ENCODE measurements at regions of chr12 and their contacts with region 1.

Region 1: GRCh38 chr12:13100882-13101769 is 2.3 kb downstream of the GSG1 start:
- DNase-seq: peak; percentile 97
- ATAC-seq: peak; percentile 88

Region 2: DNA sequence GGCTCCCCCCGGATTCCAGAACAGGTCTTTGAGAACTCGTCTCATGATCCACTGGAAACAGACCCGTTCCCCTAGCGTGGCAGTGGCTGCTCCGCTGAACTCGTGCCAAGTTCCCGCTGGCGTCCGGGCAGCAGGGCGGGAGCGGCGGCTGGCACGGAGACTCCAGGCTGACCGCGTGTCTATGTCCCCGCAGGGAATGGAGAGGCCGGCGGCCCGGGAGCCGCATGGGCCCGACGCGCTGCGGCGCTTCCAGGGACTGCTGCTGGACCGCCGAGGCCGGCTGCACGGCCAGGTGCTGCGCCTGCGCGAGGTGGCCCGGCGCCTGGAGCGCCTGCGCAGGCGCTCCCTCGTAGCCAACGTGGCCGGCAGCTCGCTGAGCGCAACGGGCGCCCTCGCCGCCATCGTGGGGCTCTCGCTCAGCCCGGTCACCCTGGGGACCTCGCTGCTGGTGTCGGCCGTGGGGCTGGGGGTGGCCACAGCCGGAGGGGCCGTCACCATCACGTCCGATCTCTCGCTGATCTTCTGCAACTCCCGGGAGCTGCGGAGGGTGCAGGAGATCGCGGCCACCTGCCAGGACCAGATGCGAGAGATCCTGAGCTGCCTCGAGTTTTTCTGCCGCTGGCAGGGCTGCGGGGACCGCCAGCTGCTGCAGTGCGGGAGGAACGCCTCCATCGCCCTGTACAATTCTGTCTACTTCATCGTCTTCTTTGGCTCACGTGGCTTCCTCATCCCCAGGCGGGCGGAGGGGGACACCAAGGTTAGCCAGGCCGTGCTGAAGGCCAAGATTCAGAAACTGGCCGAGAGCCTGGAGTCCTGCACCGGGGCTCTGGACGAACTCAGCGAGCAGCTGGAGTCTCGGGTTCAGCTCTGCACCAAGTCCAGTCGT is 314.2 kb before region 1 on chr12:
- intact Hi-C with region 1: loop called (anchors 10 kb)
- DNase-seq: peak; percentile 91
- ATAC-seq: peak; percentile 93

Region 3: DNA sequence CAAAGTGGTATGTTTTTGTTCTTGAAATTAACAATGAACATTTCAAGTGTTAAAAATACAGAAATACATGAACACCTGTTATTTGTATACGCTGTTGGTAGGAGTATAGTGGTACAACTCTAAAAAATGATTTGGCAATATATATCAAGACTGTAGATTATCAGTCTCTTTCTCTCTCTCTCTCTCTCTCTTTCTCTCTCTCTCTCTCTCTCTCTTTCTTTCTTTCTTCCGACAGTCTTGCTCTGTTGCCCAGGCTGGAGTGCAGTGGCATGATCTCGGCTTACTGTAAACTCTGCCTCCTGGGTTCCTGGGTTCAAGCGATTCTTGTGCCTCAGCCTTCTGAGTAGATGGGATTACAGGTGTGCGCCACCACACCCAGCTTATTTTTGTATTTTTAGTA is 113.7 kb before region 1 on chr12:
- intact Hi-C with region 1: no loop called
- DNase-seq: no peak
- ATAC-seq: no peak

Region 4: GRCh38 chr12:12999959-13000615 is 101.0 kb before region 1 on chr12 and contains the start of gene HEBP1:
- intact Hi-C with region 1: loop called (anchors 5 kb)
- DNase-seq: peak; percentile 99
- ATAC-seq: peak; percentile 97
- total RNA-seq, gene HEBP1: 63.5 TPM

Region 5: DNA sequence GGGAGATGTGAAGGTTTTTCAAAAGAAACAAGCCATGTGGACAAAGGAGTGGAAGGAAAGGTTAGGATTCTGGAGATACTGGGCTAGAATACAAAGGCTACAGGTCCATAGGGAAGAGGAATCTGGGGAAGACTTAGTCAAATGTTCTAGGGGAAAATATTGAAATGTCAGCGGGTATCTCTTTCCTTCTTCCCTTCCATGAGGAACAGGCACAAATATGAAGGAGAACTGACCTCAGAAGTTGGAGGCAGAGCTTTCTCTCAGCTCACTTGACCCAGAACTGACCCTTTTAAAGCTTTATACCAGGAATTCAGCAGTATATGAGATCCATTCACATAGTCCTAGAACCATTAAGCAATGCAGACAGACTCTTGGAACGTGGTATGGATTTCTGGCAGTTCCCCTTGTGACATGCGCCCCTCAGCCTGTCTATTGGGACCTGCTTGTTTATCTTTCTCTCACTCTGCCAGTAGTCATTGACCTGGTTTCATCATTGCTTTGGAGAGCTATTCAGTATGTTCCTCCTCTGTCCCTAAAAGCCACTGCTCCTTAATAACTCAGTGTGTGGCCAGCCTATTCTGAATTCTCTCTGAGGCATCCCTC is 45.3 kb after region 1 on chr12:
- intact Hi-C with region 1: loop called (anchors 2 kb)
- DNase-seq: no peak
- ATAC-seq: peak; percentile 89

Region 6: DNA sequence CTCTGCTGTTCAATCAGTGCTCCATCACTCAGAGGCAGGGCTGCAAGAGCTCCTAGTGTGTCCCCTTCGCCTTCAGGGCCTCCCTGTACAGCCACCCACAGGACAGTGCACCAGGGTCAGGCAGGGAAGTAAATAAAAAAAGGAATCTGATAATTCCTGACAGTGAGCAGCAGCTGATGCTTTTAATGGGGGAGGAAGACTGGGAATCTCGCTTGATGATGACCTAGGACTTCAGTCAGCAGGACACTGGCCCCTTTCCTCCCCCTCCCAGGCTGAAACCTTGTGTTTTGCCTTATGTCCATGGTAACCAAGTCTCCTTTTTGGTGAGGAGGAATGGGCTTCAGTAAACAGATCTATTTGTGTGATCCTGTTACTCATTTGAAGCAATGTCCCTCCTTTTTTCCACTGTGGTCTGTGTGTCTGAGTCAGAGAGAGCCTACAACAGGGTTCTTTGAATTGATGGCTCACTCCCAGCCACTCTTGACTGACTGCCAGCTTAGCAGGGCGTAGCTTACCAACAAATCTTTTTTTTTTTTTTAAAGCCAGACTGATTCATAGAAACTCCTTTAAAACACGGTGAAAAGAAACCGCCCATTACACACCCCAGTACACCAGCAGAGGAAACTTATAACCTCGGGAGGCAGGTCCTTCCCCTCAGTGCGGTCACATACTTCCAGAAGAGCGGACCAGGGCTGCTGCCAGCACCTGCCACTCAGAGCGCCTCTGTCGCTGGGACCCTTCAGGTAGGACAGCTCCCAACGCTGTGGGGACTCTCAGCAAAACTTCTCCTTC is 95.2 kb after region 1 on chr12 and contains the start of gene EMP1:
- intact Hi-C with region 1: loop called (anchors 1 kb)
- DNase-seq: peak; percentile 90
- ATAC-seq: peak; percentile 87
- total RNA-seq, gene EMP1: 129 TPM

Region 7: DNA sequence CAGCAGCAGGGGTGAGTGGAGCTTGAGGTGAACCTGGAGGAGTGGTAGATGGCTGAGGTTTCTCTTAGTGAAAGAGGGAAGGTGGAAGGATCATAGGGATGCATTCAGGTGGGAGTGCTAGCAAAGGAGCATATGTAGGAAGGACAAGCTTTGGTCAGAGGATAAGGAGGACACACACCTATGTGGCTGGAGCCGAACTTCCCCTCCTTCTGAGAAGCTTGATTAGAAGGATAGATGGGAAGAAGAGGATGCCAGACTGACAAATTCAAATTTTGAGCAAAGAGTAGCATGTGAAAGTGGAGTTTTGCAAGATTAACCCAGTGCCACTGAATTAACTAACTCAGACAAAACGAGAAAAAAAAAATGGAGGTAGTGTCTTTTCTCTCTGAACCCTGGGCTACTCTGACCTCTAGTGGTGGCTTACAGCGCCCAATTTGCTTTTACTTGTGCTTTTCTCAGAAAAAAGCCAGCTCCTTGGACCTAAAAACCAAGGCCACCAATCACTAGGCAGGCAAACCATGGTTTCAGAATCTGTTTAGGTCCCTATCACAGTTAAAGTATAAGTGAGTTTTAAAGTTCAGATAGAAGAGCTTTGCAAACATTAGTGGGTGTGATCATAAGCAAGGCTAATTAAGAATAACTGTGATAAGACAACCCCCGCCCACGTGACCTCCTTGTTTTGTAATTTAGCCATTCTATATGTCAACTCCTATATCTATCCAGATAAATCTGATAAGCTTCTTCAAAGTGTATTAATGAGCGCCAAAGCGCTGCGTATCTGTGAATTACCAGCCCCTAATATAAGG is 110.9 kb after region 1 on chr12:
- intact Hi-C with region 1: loop called (anchors 2 kb)
- DNase-seq: no peak
- ATAC-seq: peak; percentile 29

Measured in Right ventricle myocardium inferior (tissue), 1 donor.